OCI-LY7 (cell line): ENCODE measurements at regions of chr4 and their contacts with region 1.

Region 1: GRCh38 chr4:26583865-26584652 is at the start of gene TBC1D19:
- DNase-seq: peak; percentile 93
- H3K4me3 ChIP-seq: peak within 1 kb of the TSS; percentile 86
- H3K27ac ChIP-seq: peak within 1 kb of the TSS; percentile 48
- H3K4me1 ChIP-seq: peaks cover 25% of the 10 kb centered on the region
- CTCF ChIP-seq: no peak; the same call in 1 of the 2 replicates
- total RNA-seq, gene TBC1D19: 9.8 and 11.0 TPM in 2 replicates

Region 2: GRCh38 chr4:26028793-26029567 is 555.1 kb before region 1 on chr4:
- CTCF ChIA-PET with region 1: no interaction called
- POLR2A ChIA-PET with region 1: no interaction called
- intact Hi-C with region 1: no loop called
- DNase-seq: no peak
- H3K4me3 ChIP-seq: no peak overlapping the region
- H3K27ac ChIP-seq: no peak overlapping the region
- H3K4me1 ChIP-seq: no peaks in the 10 kb centered on the region
- CTCF ChIP-seq: peak; percentile 34; the same call in 1 of the 2 replicates

Region 3: GRCh38 chr4:26568446-26568994 is 15.5 kb before region 1 on chr4:
- CTCF ChIA-PET with region 1: no interaction called
- POLR2A ChIA-PET with region 1: interaction called, 14 read pairs
- intact Hi-C with region 1: no loop called
- DNase-seq: no peak
- H3K4me3 ChIP-seq: no peak overlapping the region
- H3K27ac ChIP-seq: no peak overlapping the region
- H3K4me1 ChIP-seq: no peaks in the 10 kb centered on the region
- CTCF ChIP-seq: no peak

Region 4: DNA sequence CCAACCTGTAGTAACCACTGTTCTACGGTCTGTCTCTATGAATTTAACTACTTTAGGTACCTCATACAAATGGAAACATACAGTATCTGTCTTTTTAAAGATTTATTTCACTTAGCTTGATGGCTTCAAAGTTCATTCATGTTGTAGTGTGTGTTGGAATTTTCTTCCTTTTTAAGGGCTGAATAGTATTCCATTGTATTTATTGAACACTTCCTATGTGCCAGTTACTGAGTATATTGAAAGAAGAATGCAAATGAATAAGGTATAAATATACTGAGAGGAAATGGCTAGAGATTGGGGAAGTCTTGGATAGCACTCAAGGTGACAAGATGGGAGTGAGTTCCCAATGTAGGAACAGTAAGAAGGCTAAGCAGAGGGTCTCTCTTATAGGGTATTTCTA is 17.1 kb after region 1 on chr4:
- CTCF ChIA-PET with region 1: no interaction called
- POLR2A ChIA-PET with region 1: interaction called, 10 read pairs
- intact Hi-C with region 1: no loop called
- DNase-seq: no peak
- H3K4me3 ChIP-seq: no peak overlapping the region
- H3K27ac ChIP-seq: no peak overlapping the region
- H3K4me1 ChIP-seq: no peaks in the 10 kb centered on the region
- CTCF ChIP-seq: no peak

Region 5: GRCh38 chr4:26611372-26611771 is 27.3 kb after region 1 on chr4:
- CTCF ChIA-PET with region 1: no interaction called
- POLR2A ChIA-PET with region 1: interaction called, 10 read pairs
- intact Hi-C with region 1: no loop called
- DNase-seq: peak; percentile 11
- H3K4me3 ChIP-seq: peak overlapping the region; percentile 42
- H3K27ac ChIP-seq: peak overlapping the region; percentile 91
- H3K4me1 ChIP-seq: peaks cover 65% of the 10 kb centered on the region
- CTCF ChIP-seq: no peak